ENCODE measurements at regions of chr4 and their contacts with region 1.

Region 1: DNA sequence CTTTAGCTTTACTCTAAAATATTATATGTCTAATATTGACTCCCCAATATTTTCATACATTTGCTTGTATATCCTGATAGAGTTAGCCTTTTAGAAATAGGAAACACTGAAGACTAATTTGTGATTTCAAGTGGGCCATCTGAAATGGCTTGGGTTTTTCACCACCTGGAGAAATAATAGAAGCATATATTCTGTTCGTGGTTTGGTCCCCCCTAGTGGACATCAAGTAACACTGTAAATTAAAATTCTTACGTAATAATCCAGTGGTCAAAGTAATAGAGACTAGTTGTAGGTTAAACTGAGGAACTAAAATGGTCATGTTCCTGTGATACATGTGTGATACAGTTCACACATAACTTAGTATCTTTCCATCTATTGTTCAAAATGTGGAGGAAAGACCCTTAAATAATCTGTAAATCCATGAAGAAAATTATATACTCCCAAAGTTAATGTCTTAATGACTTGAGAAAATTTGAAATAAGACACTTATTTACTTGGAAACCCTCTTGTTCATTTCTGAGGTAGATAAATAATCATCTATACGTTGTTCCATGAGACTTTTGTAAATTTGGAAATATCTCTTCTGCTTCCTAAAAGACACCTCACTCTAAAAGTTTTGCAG is 79.8 kb upstream of the SMARCAD1 start:
- H3K4me3 Mint-ChIP-seq: no peak overlapping the region
- H3K27ac Mint-ChIP-seq: no peak overlapping the region
- H3K4me1 Mint-ChIP-seq: no peaks in the 10 kb centered on the region
- H3K27me3 Mint-ChIP-seq: no peaks in the 10 kb centered on the region

Region 2: DNA sequence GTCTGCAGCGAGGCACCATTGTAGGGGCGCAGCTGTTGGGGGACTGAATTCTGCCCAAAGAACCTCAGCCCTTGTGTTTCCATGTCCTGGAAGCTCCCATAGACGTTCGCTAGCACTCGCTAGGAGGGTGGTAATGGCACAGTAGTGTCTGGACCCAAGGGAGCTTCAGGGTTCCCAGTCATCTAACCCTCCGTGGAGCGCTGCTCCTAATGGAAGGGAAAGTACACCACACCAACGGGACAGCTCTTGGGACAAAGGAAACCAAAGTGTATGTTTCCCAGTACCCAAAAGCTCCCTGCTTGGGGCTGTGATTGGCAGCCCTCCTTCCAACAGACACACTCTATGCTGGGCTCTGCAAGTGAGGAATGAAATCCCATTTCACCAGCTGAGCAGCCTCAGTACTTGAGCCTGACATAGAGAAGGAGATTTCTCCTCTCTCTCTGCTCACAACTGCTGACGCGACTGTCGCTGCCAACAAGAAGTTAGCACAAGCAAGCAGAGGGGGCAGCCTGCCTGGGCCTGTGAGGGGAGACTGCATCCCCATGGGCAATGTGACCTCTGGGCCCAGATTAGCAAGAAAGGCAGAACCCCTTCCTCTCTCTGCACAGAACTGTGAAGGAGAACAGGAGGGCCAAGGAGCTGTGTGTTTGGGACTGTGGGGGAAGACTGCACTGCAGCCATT is 12.3 kb after region 1 on chr4:
- intact Hi-C with region 1: loop called (anchors 1 kb)
- H3K4me3 Mint-ChIP-seq: no peak overlapping the region
- H3K27ac Mint-ChIP-seq: no peak overlapping the region
- H3K4me1 Mint-ChIP-seq: no peaks in the 10 kb centered on the region
- H3K27me3 Mint-ChIP-seq: peaks cover 4% of the 10 kb centered on the region